Prostate gland (tissue), 2 donors: ENCODE measurements at regions of chrX and their contacts with region 1.

Region 1: GRCh38 chrX:24371391-24371972 is 11.0 kb downstream of the SUPT20HL1 start:
- DNase-seq: peak; percentile 28
- H3K4me3 ChIP-seq: no peak overlapping the region
- H3K27ac ChIP-seq: no peak overlapping the region
- H3K4me1 ChIP-seq: no peaks in the 10 kb centered on the region
- H3K27me3 ChIP-seq: no peaks in the 10 kb centered on the region
- CTCF ChIP-seq: peak; percentile 17 to 51 (median 30)
- POLR2A ChIP-seq: no peak

Region 2: DNA sequence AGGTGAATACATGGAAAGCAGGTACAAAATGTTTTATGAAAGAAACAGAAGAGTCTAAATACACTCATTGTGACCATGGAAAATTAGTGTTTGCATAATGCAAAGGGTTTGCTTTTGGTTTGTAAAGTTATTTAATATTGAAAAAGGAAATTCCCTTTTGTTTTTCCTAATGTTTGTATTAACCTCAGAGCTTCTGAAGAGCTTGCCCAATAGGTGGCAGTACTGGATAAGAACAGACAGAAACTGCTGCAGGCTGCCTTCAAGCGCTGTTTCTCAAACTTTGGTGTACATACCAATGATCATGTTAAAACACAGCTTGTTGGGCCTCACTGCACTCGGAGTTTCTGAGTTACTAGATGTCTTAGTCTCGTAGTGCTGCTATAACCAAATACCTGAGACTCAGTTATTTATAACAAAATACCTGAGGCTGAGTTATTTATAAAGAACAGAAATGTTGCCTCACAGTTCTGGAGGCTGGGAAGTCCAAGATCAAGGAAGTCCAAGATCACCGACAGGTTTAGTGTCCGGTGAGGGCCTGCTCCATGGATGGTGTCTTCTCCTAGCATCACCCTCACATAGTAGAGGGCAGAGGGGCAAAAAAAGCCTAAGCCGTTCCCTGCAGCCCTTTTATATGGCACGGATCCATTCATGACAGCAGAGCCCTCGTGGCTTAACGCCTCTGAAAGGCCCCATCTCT is 111.8 kb before region 1 on chrX:
- intact Hi-C with region 1: loop called (anchors 10 kb)
- DNase-seq: peak; percentile 20
- H3K4me3 ChIP-seq: no peak overlapping the region
- H3K27ac ChIP-seq: no peak overlapping the region
- H3K4me1 ChIP-seq: no peaks in the 10 kb centered on the region
- H3K27me3 ChIP-seq: no peaks in the 10 kb centered on the region
- CTCF ChIP-seq: peak in 3 of 4 experiments; percentile 24 to 49 (median 30)
- POLR2A ChIP-seq: no peak